Gastrocnemius medialis (tissue), 4 donors: ENCODE measurements at regions of chr9 and their contacts with region 1.

Region 1: DNA sequence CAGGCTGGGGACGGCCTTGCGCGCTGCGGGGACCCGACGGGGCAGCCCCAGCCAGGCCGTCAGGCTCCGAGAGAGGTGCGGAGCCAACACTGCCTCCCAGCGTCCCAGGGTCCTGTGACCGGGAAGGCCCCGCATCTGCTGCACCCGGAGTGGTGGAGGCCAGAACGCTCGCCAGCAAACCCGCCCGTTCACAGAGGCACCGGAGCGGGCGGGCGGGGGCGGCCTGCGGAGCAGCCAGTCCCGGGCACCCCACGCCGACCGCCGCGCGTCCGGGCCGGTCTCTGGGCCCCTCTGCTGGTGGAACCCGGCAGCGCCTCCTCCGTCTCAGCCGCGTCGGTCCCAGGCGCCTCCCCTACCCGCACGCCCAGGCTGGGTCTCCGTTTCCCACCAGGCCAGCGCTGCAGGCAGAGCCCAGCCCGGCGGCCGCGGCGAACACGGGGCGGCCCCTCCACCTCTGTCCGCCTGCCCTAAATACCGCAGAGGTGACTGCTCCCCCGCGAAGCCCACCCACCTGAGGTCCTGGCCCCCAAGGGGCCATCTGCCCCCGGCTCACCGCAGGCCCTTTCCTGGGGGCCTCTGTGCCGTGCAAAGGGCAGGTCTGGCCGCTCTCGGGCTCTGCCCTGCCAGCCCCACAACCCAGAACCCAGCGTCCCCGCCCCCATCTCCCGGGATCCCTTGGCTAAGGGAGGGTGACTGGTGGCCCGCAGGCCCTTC is 15.9 kb downstream of the EXD3 start:
- DNase-seq: no peak
- ATAC-seq: peak; percentile 68 to 72
- H3K4me3 ChIP-seq: peak overlapping the region; percentile 28 to 54 (median 44)
- H3K27ac ChIP-seq: peak overlapping the region in 3 of 4 donors; percentile 49 to 57 (median 52)
- H3K4me1 ChIP-seq: peaks cover 15 to 29% of the 10 kb centered on the region in 2 donors
- H3K27me3 ChIP-seq: no peaks in the 10 kb centered on the region
- CTCF ChIP-seq: peak; percentile 63 to 91 (median 80)
- POLR2A ChIP-seq: no peak

Region 2: DNA sequence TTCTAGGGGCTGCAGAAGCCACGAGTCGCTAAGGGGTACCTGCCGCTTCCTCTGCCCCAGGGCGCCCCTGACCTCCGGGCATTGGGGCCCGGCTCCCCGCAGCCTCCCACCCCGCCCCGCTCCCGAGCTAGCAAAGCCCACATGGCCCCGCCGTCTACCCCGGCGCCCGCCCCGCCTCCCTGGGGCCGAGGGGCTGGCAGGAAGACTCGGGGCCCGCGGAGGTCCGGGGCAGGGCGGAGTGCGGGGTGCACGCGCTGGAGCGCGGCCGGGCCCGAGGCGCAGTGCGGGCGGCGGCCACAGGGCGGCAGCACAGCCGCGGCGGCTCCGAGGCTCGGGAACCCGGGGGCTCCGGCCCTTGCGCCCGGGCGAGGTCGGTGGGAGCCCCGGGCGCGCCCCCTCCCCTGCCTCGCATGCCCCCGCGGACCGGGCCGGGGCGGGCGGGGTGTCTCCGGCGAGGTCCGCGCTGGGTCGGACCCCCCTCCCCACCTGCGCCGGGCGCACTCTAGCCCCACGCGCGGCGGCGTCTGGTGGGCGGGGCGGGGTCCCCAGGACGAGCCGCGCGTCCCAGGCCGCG is 111.7 kb before region 1 on chr9:
- in situ Hi-C with region 1: loop called (anchors 10 to 25 kb)
- intact Hi-C with region 1: loop called (anchors 2 kb)
- DNase-seq: no peak
- ATAC-seq: peak in 1 of 2 donors; percentile 49
- H3K4me3 ChIP-seq: peak overlapping the region in 2 of 4 donors; percentile 41 to 44
- H3K27ac ChIP-seq: peak overlapping the region in 1 of 4 donors; percentile 81
- H3K4me1 ChIP-seq: peaks cover 0 to 5% of the 10 kb centered on the region in 2 donors
- H3K27me3 ChIP-seq: peaks cover 63 to 70% (median 69%) of the 10 kb centered on the region in 3 donors
- CTCF ChIP-seq: peak in 4 of 5 experiments; percentile 69 to 90 (median 81)
- POLR2A ChIP-seq: no peak